ENCODE measurements at regions of chr17 and their contacts with region 1.

Region 1: GRCh38 chr17:2054512-2055291 is at the start of gene HIC1:
- DNase-seq: peak; percentile 85
- H3K4me3 Mint-ChIP-seq: peak within 1 kb of the TSS; percentile 84
- H3K27ac Mint-ChIP-seq: peak within 1 kb of the TSS; percentile 91
- H3K4me1 Mint-ChIP-seq: peaks cover 20% of the 10 kb centered on the region
- H3K27me3 Mint-ChIP-seq: peaks cover 12% of the 10 kb centered on the region
- total RNA-seq, gene HIC1: 45.6 and 47.0 TPM in 2 replicates

Region 2: GRCh38 chr17:2070241-2071023 is 15.7 kb after region 1 on chr17:
- intact Hi-C with region 1: loop called (anchors 1 kb)
- DNase-seq: peak; percentile 68
- H3K4me3 Mint-ChIP-seq: peak overlapping the region; percentile 58
- H3K27ac Mint-ChIP-seq: peak overlapping the region; percentile 92
- H3K4me1 Mint-ChIP-seq: peaks cover 58% of the 10 kb centered on the region
- H3K27me3 Mint-ChIP-seq: no peaks in the 10 kb centered on the region

Region 3: GRCh38 chr17:2244545-2245525 is 190.1 kb after region 1 on chr17:
- intact Hi-C with region 1: loop called (anchors 1 kb)
- DNase-seq: peak; percentile 75
- H3K4me3 Mint-ChIP-seq: no peak overlapping the region
- H3K27ac Mint-ChIP-seq: peak overlapping the region; percentile 76
- H3K4me1 Mint-ChIP-seq: peaks cover 70% of the 10 kb centered on the region
- H3K27me3 Mint-ChIP-seq: no peaks in the 10 kb centered on the region

Region 4: DNA sequence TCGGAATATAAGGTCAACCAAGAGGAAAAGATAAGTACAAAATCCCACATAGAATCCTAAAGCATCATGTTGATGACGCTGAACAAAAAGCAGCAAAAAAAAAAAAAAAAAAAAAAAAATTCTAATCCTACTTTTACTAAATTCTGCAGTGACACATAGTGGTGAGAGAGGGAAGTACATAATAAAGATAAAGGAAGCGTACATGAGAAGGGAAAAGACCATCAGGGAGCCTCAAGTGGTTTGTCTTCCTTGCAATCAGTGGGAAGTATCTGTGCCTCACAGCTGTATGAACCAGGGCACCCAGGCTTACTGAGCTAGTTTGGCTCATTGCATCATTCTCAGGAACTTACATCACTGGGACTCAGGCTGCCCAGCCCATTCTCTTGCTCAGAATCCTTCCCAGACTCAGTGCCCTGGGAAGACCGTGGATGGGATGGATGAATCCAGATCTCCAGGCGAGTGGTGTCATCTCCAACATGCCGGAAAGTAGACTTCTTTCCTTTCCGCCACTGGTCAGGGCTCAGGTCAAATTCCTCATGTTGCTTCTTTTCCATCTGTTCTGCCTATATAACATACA is 227.7 kb after region 1 on chr17:
- intact Hi-C with region 1: loop called (anchors 1 kb)
- DNase-seq: no peak
- H3K4me3 Mint-ChIP-seq: no peak overlapping the region
- H3K27ac Mint-ChIP-seq: peak overlapping the region; percentile 76
- H3K4me1 Mint-ChIP-seq: peaks cover 45% of the 10 kb centered on the region
- H3K27me3 Mint-ChIP-seq: no peaks in the 10 kb centered on the region

Region 5: DNA sequence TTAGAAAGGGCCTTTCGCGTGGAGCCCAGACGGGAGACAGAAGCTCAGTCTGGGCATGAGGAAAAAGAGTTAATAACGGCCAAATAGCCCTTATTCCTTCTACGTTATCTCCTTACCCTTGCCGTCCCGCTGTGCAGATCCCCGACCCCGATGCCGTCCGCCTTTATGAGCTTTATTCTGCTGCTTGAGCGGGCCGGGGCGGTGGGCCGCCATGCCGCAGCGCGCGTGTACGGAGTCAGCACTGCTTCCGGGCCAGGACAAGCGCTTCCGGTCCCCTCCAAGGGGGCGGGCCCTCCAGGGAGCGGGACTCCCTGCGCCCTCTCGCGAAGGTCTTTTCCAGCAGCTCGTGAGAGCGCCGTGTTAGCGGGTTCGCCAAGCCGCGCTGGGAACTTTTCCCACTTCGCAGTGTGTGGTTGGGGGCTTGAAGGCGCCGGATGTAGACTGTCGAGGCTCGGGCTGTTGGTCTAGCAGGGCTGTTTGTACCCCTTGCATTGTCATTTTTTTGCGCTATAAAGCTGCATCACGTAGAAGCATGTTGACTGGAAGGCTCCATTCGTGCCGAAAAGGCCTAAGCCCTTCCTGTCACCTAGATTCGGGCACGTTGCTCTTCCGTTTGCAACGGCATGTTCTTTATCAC is 281.6 kb after region 1 on chr17 and contains the start of gene TSR1:
- intact Hi-C with region 1: loop called (anchors 1 kb)
- DNase-seq: peak; percentile 86
- H3K4me3 Mint-ChIP-seq: no peak within 1 kb of the TSS
- H3K27ac Mint-ChIP-seq: peak within 1 kb of the TSS; percentile 94
- H3K4me1 Mint-ChIP-seq: peaks cover 5% of the 10 kb centered on the region
- H3K27me3 Mint-ChIP-seq: no peaks in the 10 kb centered on the region
- total RNA-seq, gene TSR1: 91.3 and 92.9 TPM in 2 replicates

Region 6: GRCh38 chr17:2392252-2393173 is 337.8 kb after region 1 on chr17:
- intact Hi-C with region 1: loop called (anchors 2 kb)
- DNase-seq: peak; percentile 98
- H3K4me3 Mint-ChIP-seq: peak overlapping the region; percentile 88
- H3K27ac Mint-ChIP-seq: peak overlapping the region; percentile 96
- H3K4me1 Mint-ChIP-seq: peaks cover 34% of the 10 kb centered on the region
- H3K27me3 Mint-ChIP-seq: no peaks in the 10 kb centered on the region

Measured in activated T-helper 1 cell treated with anti-CD3 and anti-CD28 coated beads, Interleukin-12 subunit alpha, Interleukin-12 subunit beta, Interleukin-2, Interleukin-4 antibody, amounts not matched to agents 30 ng/mL and 10 ng/mL and 1 ng/mL, durations not matched to agents 14 hours and 24 hours and 36 hours (primary cell).